CD4-positive, alpha-beta memory T cell (primary cell): ENCODE measurements at regions of chr13 and their contacts with region 1.

Region 1: DNA sequence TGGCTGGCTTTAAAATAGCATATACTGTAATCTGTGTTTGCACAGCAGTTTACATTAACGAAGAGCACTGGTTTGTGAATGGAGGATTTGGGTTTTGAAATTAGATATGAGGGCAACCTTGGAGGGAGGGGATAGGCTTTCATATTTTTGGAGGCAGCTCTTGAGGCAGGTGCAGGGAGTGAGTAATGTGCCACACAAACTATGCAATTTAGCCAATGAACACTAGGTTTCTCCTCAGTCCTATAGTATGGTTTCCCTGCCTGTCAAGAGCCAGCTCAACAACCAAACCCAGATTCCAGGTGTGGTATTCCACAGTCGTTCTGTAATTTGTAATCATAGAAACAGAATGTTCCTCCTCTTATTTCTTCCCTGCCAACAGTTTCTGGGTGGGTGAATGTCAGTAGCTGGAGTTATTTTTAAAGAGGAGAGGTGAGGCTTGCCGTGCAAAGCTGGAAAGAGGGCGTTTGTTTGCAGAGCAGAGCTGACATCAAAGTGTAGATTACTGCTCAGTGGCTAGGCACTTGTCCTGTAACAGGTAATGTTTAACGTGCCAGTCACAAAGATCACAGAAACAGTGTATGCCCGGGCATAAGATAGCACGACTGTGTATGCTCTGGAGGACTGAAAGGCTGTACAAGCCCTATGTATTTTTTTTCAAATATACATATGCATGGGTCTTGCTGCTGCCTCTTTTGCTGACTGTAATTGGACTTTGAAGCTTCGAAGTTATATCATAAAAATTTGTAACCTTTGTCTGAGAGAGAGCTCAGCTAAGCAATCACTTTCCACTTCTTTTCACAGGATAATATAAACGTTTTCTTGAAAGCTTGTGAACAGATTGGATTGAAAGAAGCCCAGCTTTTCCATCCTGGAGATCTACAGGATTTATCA is 124.2 kb downstream of the LMO7 start:
- DNase-seq: peak in 4 of 5 donors; percentile 24 to 29 (median 26)
- H3K4me3 ChIP-seq: peak overlapping the region in 1 of 2 donors; percentile 20
- H3K4me3 Mint-ChIP-seq: peak overlapping the region; percentile 77 to 91 (median 84)
- H3K27ac ChIP-seq: no peak overlapping the region
- H3K27ac Mint-ChIP-seq: peak overlapping the region; percentile 62 to 87 (median 77)
- H3K4me1 ChIP-seq: peaks cover 64% of the 10 kb centered on the region
- H3K4me1 Mint-ChIP-seq: peaks cover 54 to 80% (median 66%) of the 10 kb centered on the region in 4 donors
- H3K27me3 ChIP-seq: no peaks in the 10 kb centered on the region
- H3K27me3 Mint-ChIP-seq: no peaks in the 10 kb centered on the region

Region 2: GRCh38 chr13:75803164-75803611 is 42.8 kb after region 1 on chr13:
- CTCF ChIA-PET with region 1: interaction called, 4 read pairs
- POLR2A ChIA-PET with region 1: interaction called, 8 read pairs
- intact Hi-C with region 1: loop called (anchors 1 kb)
- DNase-seq: peak in 4 of 5 donors; percentile 26 to 38 (median 32)
- H3K4me3 ChIP-seq: no peak overlapping the region
- H3K4me3 Mint-ChIP-seq: peak overlapping the region in 7 of 8 donors; percentile 0 to 80 (median 34)
- H3K27ac ChIP-seq: no peak overlapping the region
- H3K27ac Mint-ChIP-seq: peak overlapping the region in 6 of 7 donors; percentile 22 to 84 (median 76)
- H3K4me1 ChIP-seq: peaks cover 15% of the 10 kb centered on the region
- H3K4me1 Mint-ChIP-seq: peaks cover 17 to 32% (median 22%) of the 10 kb centered on the region in 4 donors
- H3K27me3 ChIP-seq: no peaks in the 10 kb centered on the region
- H3K27me3 Mint-ChIP-seq: no peaks in the 10 kb centered on the region